ENCODE measurements at regions of chr16 and their contacts with region 1.

Region 1: DNA sequence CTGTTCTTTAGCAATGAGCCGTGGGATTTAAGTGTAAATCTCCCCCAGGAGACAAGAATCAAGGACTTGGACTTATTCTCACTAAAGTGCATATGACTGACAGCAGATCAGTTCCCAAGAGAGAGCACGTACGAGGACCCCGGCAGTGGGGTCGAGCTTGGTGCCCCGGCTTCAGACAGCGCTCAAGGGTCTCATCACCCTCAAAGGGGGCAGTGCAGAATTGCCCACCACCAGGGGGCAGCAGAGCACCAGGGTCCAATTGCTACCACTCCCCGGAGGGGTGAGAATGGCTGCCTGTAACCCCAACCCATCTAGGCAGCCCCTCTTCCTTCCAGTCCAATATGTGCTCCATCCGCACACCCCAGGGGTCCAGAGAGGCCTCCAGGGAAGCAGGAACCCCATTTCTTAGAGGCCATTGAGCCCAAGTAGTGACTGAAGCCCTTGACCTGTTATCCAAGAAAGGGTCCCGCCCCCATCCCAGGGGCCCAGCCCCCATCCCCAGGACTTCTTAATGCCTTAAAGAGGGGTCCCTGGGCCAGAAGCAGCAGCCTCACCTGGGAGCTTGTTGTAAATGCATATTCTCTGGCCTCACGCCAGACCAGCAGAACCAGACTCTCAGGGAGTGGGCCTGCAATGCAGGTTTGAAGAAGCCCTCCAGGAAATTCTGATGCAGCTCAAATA is 86.1 kb downstream of the ZDHHC7 start:
- DNase-seq: peak; percentile 56
- H3K4me3 ChIP-seq: no peak overlapping the region; a peak in 1 of 4 replicates
- H3K27ac ChIP-seq: no peak overlapping the region
- H3K4me1 ChIP-seq: peaks cover 0 to 20% of the 10 kb centered on the region in 2 experiments; a peak in 1 of 4 replicates
- H3K27me3 ChIP-seq: no peaks in the 10 kb centered on the region
- CTCF ChIP-seq: peak; percentile 73
- EP300 ChIP-seq: no peak
- RAD21 ChIP-seq: peak; percentile 56

Region 2: GRCh38 chr16:84396537-84397008 is 528.7 kb before region 1 on chr16:
- CTCF ChIA-PET with region 1: no interaction called
- POLR2A ChIA-PET with region 1: no interaction called
- DNase-seq: no peak
- H3K4me3 ChIP-seq: no peak overlapping the region
- H3K27ac ChIP-seq: no peak overlapping the region
- H3K4me1 ChIP-seq: no peaks in the 10 kb centered on the region
- H3K27me3 ChIP-seq: peaks cover 20% of the 10 kb centered on the region; the same call in 1 of the 2 replicates
- CTCF ChIP-seq: no peak
- EP300 ChIP-seq: no peak
- RAD21 ChIP-seq: no peak

Region 3: GRCh38 chr16:84720177-84720579 is 205.1 kb before region 1 on chr16:
- CTCF ChIA-PET with region 1: no interaction called
- POLR2A ChIA-PET with region 1: no interaction called
- DNase-seq: peak; percentile 71
- H3K4me3 ChIP-seq: peak overlapping the region; percentile 12 to 27; a peak in 2 of 4 replicates
- H3K27ac ChIP-seq: peak overlapping the region; percentile 68 to 84
- H3K4me1 ChIP-seq: peaks cover 22 to 30% of the 10 kb centered on the region in 2 experiments; a peak in 3 of 4 replicates
- H3K27me3 ChIP-seq: no peaks in the 10 kb centered on the region
- CTCF ChIP-seq: peak; percentile 10; the same call in 1 of the 2 replicates
- EP300 ChIP-seq: peak in 1 of 2 experiments; percentile 81; a peak in 2 of 4 replicates
- RAD21 ChIP-seq: no peak

Region 4: DNA sequence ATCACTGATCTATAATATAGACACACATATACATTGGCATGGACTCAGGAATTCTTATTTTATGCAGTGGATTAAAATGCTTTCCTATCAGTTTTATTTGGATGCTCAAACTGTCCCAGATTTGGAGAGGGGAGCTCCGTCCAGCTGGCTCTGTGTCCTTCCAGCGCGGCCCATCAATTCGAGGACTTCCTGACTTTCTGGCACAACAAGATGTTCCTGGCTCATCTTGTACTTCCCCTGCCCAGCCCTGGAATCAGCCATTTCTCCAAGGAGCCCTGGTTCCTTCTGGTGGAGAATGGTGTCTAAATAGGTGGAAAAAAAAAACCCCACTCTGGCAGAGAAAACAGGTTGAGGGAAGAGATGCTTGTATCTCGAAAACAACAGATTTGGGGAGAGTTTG is 11.0 kb before region 1 on chr16:
- CTCF ChIA-PET with region 1: interaction called, 16 read pairs
- POLR2A ChIA-PET with region 1: no interaction called
- DNase-seq: no peak
- H3K4me3 ChIP-seq: no peak overlapping the region
- H3K27ac ChIP-seq: no peak overlapping the region
- H3K4me1 ChIP-seq: peaks cover 0 to 3% of the 10 kb centered on the region in 2 experiments; a peak in 1 of 4 replicates
- H3K27me3 ChIP-seq: no peaks in the 10 kb centered on the region
- CTCF ChIP-seq: no peak
- EP300 ChIP-seq: no peak
- RAD21 ChIP-seq: no peak

Region 5: DNA sequence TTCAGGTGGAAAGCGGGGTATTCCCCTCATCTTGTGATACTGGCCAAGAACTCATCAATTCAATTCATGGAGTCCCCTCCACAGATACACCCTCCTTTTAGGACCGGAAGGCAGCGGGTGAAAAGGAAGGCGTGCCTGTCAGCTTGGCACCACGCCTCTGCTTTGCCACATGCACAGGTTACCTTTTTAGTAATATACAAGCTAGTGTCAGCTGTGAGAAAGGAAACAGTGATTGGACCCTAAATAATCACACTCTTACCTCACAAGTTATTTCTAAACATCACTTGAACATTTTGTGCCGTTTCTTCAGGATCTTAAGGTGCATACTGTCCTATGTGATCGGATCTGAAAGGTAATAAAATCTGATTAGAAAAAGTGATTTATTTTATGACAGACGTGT is 70.4 kb after region 1 on chr16:
- CTCF ChIA-PET with region 1: no interaction called
- POLR2A ChIA-PET with region 1: no interaction called
- DNase-seq: no peak
- H3K4me3 ChIP-seq: no peak overlapping the region
- H3K27ac ChIP-seq: peak overlapping the region in 1 of 2 experiments; percentile 86; a peak in 2 of 4 replicates
- H3K4me1 ChIP-seq: peaks cover 0 to 23% of the 10 kb centered on the region in 2 experiments; a peak in 2 of 4 replicates
- H3K27me3 ChIP-seq: no peaks in the 10 kb centered on the region
- CTCF ChIP-seq: no peak
- EP300 ChIP-seq: no peak
- RAD21 ChIP-seq: no peak